WTC11 (cell line): ENCODE measurements at regions of chr18 and their contacts with region 1.

Region 1: DNA sequence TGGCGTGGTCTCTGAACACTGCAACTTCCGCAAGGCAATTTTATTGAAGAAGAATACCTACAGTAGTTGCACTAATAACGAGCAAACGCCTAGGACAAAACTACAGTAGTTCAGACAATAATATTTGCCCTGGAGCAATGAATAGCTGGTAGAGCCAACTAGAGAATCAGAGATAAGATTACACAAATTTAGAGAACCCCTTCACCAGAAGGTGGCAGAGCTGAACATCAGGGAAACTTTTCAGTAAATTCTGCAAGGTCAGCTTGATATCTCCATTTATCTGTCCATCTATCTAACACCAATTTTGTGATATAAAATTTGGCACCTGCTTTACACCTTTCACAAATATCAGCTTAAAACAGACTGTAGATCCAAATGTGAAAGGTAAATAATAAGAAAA is 43.8 kb downstream of the CDH19 start:
- DNase-seq: no peak
- ATAC-seq: no peak; the same call in none of the 2 replicates
- H3K4me3 Mint-ChIP-seq: no peak overlapping the region
- H3K27ac Mint-ChIP-seq: no peak overlapping the region; the same call in 1 of the 2 replicates
- H3K4me1 Mint-ChIP-seq: no peaks in the 10 kb centered on the region
- H3K27me3 Mint-ChIP-seq: no peaks in the 10 kb centered on the region
- CTCF ChIP-seq: 0 out of 2 replicates have a peak, but pooled peaks have one; percentile 15

Region 2: DNA sequence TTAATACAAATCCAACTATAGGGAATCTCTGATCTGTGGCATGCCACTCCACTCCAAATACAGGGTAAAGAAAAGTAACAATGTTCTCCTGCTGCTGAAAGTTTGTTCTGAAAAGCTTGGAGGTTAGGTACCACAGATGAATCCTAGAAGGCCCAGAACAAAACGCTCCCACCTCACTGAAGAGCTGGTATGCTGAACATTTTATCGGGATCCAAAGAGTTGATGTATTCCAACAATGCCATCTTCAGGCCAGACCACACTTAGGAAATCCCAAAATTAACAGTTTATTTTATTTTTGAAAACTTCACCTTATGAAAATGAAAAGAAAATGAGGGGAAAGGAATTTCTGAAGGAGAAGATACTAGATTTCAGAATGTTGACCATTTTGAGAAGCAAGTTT is 188.9 kb after region 1 on chr18:
- CTCF ChIA-PET with region 1: interaction called, 12 read pairs
- POLR2A ChIA-PET with region 1: no interaction called
- DNase-seq: no peak
- ATAC-seq: peak; percentile 70
- H3K4me3 Mint-ChIP-seq: no peak overlapping the region
- H3K27ac Mint-ChIP-seq: no peak overlapping the region
- H3K4me1 Mint-ChIP-seq: no peaks in the 10 kb centered on the region
- H3K27me3 Mint-ChIP-seq: no peaks in the 10 kb centered on the region
- CTCF ChIP-seq: no peak